Heart left ventricle (tissue), 16 donors: ENCODE measurements at regions of chr1 and their contacts with region 1.

Region 1: DNA sequence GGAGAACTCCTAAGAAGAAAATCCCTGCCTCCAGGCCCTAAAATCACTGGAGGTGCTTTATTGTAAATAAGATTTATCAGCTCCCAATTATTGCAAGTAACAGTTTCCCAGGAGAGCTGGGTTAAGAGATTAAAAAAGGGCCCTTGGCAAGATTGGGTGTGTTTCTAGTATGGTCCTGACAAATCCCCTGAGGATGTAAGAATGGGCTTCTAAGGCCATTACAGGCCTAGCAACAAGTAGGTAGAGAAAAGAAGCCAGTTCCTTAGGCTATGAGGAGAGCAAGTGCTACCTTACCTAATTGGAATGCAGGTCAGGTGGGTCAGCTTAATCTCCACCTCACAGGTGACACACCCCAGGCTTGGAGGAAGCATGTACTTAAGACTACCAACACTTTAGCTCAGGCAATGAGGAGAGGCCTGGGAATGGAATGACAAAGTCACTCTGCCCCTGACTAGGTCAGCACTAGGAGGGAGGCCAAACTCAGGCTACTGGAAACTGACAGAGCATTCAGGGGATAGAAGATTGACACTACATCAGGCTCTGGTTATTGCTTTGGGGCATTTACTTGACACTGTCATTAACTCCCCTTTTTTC is 6.8 kb upstream of the OTUD7B start:
- DNase-seq: no peak
- ATAC-seq: peak in 1 of 4 donors; percentile 34
- H3K4me3 ChIP-seq: no peak overlapping the region
- H3K27ac ChIP-seq: peak overlapping the region in 1 of 12 donors; percentile 7
- H3K4me1 ChIP-seq: peaks cover 0 to 7% (median 0%) of the 10 kb centered on the region in 12 donors
- H3K27me3 ChIP-seq: peaks cover 0 to 63% (median 0%) of the 10 kb centered on the region in 9 donors
- CTCF ChIP-seq: no peak
- POLR2A ChIP-seq: no peak

Region 2: GRCh38 chr1:149979972-149980540 is 37.2 kb before region 1 on chr1:
- intact Hi-C with region 1: loop called in 1 of 10 experiments (anchors 5 kb)
- DNase-seq: no peak
- ATAC-seq: no peak
- H3K4me3 ChIP-seq: no peak overlapping the region
- H3K27ac ChIP-seq: no peak overlapping the region
- H3K4me1 ChIP-seq: peaks cover 0 to 23% (median 8%) of the 10 kb centered on the region in 12 donors
- H3K27me3 ChIP-seq: peaks cover 0 to 39% (median 0%) of the 10 kb centered on the region in 9 donors
- CTCF ChIP-seq: no peak
- POLR2A ChIP-seq: no peak

Region 3: DNA sequence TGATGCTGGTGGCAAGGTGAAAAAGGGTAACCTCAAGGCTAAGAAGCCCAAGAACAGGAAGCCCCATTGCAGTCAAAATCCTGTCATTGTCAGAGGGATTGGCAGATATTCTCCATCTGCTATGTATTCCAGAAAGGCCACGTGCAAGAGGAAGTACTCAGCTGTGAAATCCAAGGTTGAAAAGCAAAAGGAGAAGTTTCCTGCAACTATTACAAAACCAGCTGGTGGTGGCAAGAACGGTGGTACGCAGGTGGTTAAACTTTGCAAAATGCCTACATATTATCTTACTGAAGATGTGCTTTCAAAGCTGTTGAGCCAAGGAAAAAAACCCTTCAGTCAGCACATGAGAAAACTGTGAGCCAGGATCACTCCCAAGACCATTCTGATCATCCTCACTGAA is 36.6 kb after region 1 on chr1:
- intact Hi-C with region 1: loop called in 3 of 10 experiments (anchors 5 kb)
- DNase-seq: no peak
- ATAC-seq: no peak
- H3K4me3 ChIP-seq: no peak overlapping the region
- H3K27ac ChIP-seq: no peak overlapping the region
- H3K4me1 ChIP-seq: peaks cover 0 to 20% (median 0%) of the 10 kb centered on the region in 12 donors
- H3K27me3 ChIP-seq: no peaks in the 10 kb centered on the region
- CTCF ChIP-seq: no peak
- POLR2A ChIP-seq: no peak

Region 4: DNA sequence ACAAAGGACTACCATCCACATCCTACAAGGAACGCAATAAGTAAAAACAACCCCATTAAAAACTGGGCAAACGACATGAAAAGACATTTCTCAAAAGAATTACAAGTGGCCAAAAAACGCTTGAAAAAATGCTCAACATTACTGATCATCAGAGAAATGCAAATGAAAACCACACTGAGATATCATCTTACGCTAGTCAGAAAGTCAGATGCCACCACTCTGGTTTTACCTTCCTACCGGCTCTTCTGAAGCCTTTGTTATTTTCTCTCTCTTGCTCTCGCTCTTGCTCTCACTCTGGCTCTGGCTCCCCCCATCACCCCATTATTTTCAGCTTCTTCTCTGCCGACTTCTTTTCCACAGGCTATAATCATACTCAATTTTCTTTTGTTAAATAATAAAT is 89.0 kb after region 1 on chr1:
- intact Hi-C with region 1: no loop called
- DNase-seq: no peak
- ATAC-seq: no peak
- H3K4me3 ChIP-seq: no peak overlapping the region
- H3K27ac ChIP-seq: peak overlapping the region in 1 of 12 donors; percentile 54
- H3K4me1 ChIP-seq: peaks cover 0 to 22% (median 2%) of the 10 kb centered on the region in 12 donors
- H3K27me3 ChIP-seq: no peaks in the 10 kb centered on the region
- CTCF ChIP-seq: no peak
- POLR2A ChIP-seq: no peak

Region 5: DNA sequence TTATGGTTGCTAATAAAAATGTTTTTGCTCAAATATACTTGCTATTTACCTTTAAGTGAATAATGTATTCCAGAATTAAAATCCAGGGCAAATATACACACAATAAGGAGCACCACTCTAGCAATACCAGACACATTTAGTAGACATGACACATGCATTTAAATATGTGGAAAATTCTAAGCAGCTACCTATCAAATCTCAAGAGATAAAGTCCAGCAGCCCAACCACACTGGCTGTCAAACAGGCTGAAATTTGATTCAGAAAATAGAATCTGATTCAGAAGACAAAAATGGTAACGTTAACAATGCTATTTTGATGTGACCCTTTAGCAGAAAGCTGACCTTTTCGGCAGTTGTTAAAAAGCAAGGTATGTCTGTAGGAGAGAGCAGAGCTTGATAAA is 174.7 kb after region 1 on chr1:
- intact Hi-C with region 1: no loop called
- DNase-seq: peak in 1 of 5 donors; percentile 13
- ATAC-seq: peak; percentile 85 to 95 (median 86)
- H3K4me3 ChIP-seq: no peak overlapping the region
- H3K27ac ChIP-seq: peak overlapping the region; percentile 38 to 96 (median 72)
- H3K4me1 ChIP-seq: peaks cover 0 to 19% (median 6%) of the 10 kb centered on the region in 12 donors
- H3K27me3 ChIP-seq: no peaks in the 10 kb centered on the region
- CTCF ChIP-seq: no peak
- POLR2A ChIP-seq: no peak